ENCODE measurements at regions of chr1 and their contacts with region 1.

Region 1: GRCh38 chr1:204177133-204177532 is 11.0 kb upstream of the REN start:
- DNase-seq: peak; percentile 67 to 82 (median 72)
- ATAC-seq: peak; percentile 94
- H3K4me3 ChIP-seq: no peak overlapping the region
- H3K27ac ChIP-seq: no peak overlapping the region
- H3K4me1 ChIP-seq: peaks cover 18 to 27% of the 10 kb centered on the region in 2 experiments; a peak in 4 of 5 replicates
- H3K27me3 ChIP-seq: peaks cover 5 to 12% of the 10 kb centered on the region in 2 experiments; a peak in 4 of 5 replicates
- CTCF ChIP-seq: no peak
- EP300 ChIP-seq: peak; percentile 83
- POLR2A ChIP-seq: no peak
- RAD21 ChIP-seq: no peak

Region 2: GRCh38 chr1:203682473-203683383 is 494.4 kb before region 1 on chr1:
- CTCF ChIA-PET with region 1: no interaction called
- POLR2A ChIA-PET with region 1: no interaction called
- in situ Hi-C with region 1: no loop called
- intact Hi-C with region 1: no loop called
- DNase-seq: peak; percentile 53 to 77 (median 58)
- ATAC-seq: peak; percentile 78
- H3K4me3 ChIP-seq: peak overlapping the region; percentile 36
- H3K27ac ChIP-seq: peak overlapping the region; percentile 69
- H3K4me1 ChIP-seq: peaks cover 26 to 38% of the 10 kb centered on the region in 2 experiments
- H3K27me3 ChIP-seq: no peaks in the 10 kb centered on the region
- CTCF ChIP-seq: no peak
- EP300 ChIP-seq: peak; percentile 76; the same call in 1 of the 2 replicates
- POLR2A ChIP-seq: peak; percentile 49; the same call in 1 of the 2 replicates
- RAD21 ChIP-seq: peak in 1 of 2 experiments; percentile 7; a peak in 1 of 4 replicates

Region 3: DNA sequence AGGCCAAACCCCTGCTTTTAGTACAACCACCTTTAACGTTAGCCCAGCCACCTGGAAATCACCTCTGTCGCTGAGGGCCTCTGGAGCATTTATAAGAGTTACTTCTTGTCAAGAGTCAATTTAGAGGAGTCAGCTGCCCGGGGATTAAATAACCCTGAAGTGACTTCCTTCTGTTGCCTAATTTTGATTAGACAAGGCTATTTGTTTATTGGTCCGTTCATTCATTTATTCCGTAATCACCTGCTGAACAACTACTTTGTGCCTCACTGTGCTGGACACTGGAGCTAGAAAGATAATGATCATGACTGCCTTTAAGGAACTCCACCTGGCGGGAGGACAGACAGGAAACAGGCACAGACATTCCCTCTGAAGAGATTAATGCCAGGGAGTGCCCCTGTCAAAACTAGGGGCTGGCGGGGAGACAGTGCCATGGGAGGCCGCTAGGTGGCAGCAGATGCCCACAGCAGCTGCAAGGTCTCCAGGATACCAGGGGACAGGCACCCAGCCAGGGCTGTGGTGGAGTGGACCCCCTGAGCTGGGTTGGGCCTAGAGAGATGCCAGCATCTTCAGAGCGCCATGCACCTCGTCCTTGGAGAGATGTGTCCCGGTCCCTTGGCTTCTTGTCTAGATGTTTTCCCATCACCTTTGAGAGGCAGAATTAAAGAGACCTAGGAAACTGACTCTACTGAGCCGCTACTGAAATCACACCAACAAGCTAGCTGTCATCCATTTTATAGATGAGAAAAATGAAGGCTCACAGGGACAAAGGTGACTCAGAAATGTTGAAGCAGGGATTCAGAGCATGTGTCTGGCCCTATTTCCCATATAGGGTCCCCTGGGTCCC is 14.7 kb before region 1 on chr1:
- CTCF ChIA-PET with region 1: interaction called, 4 read pairs
- POLR2A ChIA-PET with region 1: interaction called, 13 read pairs
- in situ Hi-C with region 1: no loop called
- intact Hi-C with region 1: no loop called
- DNase-seq: peak; percentile 76 to 94 (median 90)
- ATAC-seq: peak; percentile 98
- H3K4me3 ChIP-seq: no peak overlapping the region
- H3K27ac ChIP-seq: no peak overlapping the region
- H3K4me1 ChIP-seq: no peaks in the 10 kb centered on the region
- H3K27me3 ChIP-seq: peaks cover 3 to 43% of the 10 kb centered on the region in 2 experiments; a peak in 4 of 5 replicates
- CTCF ChIP-seq: peak; percentile 96 to 99 (median 98)
- EP300 ChIP-seq: no peak
- POLR2A ChIP-seq: no peak
- RAD21 ChIP-seq: peak; percentile 99 to 100

Measured in K562 (cell line).